ENCODE measurements at regions of chr10 and their contacts with region 1.

Region 1: GRCh38 chr10:59085711-59086502 is 90.5 kb upstream of the PHYHIPL start:
- DNase-seq: no peak
- ATAC-seq: no peak

Region 2: GRCh38 chr10:58773341-58773740 is 312.6 kb before region 1 on chr10:
- intact Hi-C with region 1: no loop called
- DNase-seq: no peak
- ATAC-seq: peak; percentile 8

Region 3: DNA sequence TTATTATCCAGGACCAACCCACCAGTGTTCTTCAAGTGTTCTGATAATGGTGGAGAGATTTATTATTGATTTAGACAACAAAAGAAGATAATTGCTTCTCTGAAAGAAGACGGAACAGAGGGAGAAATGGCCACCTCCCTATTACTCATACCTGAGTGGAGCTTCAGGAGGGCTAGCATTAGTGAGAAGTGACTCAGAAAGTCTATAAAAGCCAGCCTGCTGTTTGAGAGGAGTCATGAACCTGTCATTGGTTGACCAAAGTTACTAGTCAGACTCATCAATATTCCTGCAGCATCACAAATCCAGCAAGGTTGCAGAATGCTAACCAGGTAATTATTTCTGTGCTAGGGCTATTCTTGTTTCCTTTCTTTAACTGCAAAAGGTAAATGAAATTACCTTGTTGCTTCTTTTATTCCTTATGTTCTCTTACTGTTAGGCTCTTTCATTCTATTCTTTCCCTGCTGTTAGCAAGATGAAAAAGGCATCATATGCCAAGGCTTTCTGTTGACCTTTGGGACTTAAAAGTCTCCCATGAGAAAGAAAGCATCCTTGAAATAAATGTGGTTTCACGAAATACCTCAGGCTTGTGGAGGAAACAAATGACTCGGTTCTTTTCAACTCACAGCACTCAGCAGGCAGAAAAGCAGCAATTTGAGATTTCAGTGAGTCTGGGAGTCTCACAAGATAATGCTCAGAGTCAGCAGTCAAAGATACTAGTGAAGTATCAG is 165.8 kb before region 1 on chr10:
- intact Hi-C with region 1: no loop called
- DNase-seq: no peak
- ATAC-seq: peak; percentile 59

Region 4: DNA sequence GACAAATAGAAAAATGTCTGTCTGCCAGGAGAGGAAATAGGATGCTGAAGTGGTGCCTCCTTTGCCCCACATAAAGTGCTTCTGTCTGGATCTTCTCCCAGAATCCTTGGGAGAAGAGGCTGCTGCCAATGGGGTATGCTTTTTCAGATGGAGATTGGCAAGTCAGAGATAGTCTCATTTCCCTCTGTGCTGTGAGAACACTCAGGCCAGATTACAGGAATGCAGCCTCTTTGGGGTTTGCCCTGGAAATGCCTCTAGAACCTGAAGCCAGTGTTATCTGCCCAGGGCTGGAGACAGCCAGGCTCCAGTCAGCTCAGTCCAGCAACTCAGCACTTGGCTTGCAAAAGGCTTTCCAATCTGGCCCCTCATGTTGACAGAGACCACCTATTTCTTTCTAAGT is 28.6 kb before region 1 on chr10:
- intact Hi-C with region 1: loop called (anchors 2 kb)
- DNase-seq: no peak
- ATAC-seq: peak; percentile 51

Region 5: GRCh38 chr10:59135275-59135674 is 49.4 kb after region 1 on chr10:
- intact Hi-C with region 1: no loop called
- DNase-seq: no peak
- ATAC-seq: no peak